SK-MEL-5 (cell line): ENCODE measurements at regions of chr2 and their contacts with region 1.

Region 1: GRCh38 chr2:68290901-68291300 is 28.8 kb downstream of the CNRIP1 start:
- DNase-seq: no peak

Region 2: GRCh38 chr2:68108120-68108519 is 182.8 kb before region 1 on chr2:
- in situ Hi-C with region 1: loop called (anchors 5 kb)
- DNase-seq: no peak

Region 3: DNA sequence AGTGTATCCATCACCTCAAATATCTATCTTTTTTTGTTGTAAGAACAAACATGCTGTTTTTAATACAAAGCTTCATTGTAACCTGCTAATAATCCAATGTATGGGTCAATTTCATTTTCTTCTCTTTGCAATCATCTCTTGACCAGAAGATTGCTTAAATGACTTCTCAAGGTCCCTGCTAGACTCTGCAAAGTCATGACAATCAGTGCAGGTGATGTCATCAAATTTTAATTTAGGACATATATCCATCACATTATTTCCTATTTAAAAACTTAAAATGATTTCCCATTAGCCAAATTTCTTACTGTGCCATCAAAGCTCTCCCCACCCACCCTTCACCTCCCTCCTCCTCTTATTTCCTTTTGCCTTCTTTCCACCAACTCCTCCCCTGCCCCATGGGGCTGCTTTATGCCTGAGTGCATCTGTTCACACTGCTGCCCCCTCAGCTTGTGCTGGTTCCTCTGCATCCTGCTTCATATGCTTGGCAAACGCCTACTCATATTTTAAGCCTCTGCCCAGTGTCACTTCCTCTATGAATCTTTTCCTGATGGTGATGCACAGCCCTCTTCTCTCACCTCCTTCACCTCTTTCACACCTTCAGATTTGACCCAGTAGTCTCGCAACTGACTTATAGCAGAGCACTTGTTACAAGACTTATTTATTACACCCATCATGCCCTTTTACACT is 94.5 kb after region 1 on chr2:
- in situ Hi-C with region 1: no loop called
- DNase-seq: no peak